Mucosa of descending colon (tissue), 3 donors: ENCODE measurements at regions of chr11 and their contacts with region 1.

Region 1: GRCh38 chr11:47373876-47374720 is 4.2 kb downstream of the SPI1 start:
- DNase-seq: peak; percentile 81 to 92 (median 88)
- ATAC-seq: peak; percentile 80
- H3K4me3 ChIP-seq: no peak overlapping the region
- H3K4me1 ChIP-seq: no peaks in the 10 kb centered on the region
- CTCF ChIP-seq: peak; percentile 88

Region 2: DNA sequence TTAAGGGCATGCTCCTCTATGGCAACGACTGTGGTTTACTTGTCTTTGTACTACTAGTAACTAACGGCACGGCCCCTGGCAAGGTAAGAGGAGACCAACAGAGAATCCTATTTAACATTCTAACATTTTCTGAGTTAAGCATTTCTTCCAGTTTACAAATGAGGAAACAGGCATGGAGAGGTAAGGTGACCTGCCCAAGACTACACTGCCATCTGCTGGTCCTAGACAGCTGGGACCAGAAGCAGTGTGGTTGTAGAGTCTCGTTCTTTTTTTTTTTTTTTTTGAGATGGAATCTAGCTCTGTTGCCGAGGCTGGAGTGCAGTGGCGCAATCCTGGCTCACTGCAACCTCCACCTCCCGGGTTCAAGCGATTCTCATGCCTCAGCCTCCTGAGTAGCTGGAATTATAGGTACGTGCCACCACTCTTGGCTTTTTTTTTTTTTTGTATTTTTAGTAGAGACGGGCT is 80.1 kb after region 1 on chr11:
- intact Hi-C with region 1: loop called in 1 of 2 experiments (anchors 10 kb)
- DNase-seq: peak; percentile 55 to 89 (median 68)
- ATAC-seq: peak; percentile 93
- H3K4me3 ChIP-seq: no peak overlapping the region
- H3K4me1 ChIP-seq: no peaks in the 10 kb centered on the region
- CTCF ChIP-seq: peak; percentile 59

Region 3: GRCh38 chr11:47595029-47595428 is 220.9 kb after region 1 on chr11:
- intact Hi-C with region 1: no loop called
- DNase-seq: no peak
- ATAC-seq: no peak
- H3K4me3 ChIP-seq: no peak overlapping the region
- H3K4me1 ChIP-seq: peaks cover 7% of the 10 kb centered on the region
- CTCF ChIP-seq: no peak